Right ventricle myocardium inferior (tissue), 1 donor: ENCODE measurements at regions of chr6 and their contacts with region 1.

Region 1: GRCh38 chr6:35240840-35241801 is 18.4 kb upstream of the ZNF76 start:
- DNase-seq: no peak
- ATAC-seq: peak; percentile 26

Region 2: GRCh38 chr6:34867484-34867883 is 373.6 kb before region 1 on chr6:
- intact Hi-C with region 1: loop called (anchors 10 kb)
- DNase-seq: no peak
- ATAC-seq: peak; percentile 72

Region 3: GRCh38 chr6:35146453-35146852 is 94.7 kb before region 1 on chr6:
- intact Hi-C with region 1: loop called (anchors 1 kb)
- DNase-seq: no peak
- ATAC-seq: peak; percentile 86

Region 4: GRCh38 chr6:35202066-35202546 is 39.0 kb before region 1 on chr6:
- intact Hi-C with region 1: loop called (anchors 2 kb)
- DNase-seq: no peak
- ATAC-seq: peak; percentile 73

Region 5: GRCh38 chr6:35213824-35214756 is 27.0 kb before region 1 on chr6 and contains the start of gene SCUBE3:
- intact Hi-C with region 1: loop called (anchors 1 kb)
- DNase-seq: no peak
- ATAC-seq: peak; percentile 41
- total RNA-seq, gene SCUBE3: 10.3 TPM